MCF 10A (cell line): ENCODE measurements at regions of chr11 and their contacts with region 1.

Region 1: DNA sequence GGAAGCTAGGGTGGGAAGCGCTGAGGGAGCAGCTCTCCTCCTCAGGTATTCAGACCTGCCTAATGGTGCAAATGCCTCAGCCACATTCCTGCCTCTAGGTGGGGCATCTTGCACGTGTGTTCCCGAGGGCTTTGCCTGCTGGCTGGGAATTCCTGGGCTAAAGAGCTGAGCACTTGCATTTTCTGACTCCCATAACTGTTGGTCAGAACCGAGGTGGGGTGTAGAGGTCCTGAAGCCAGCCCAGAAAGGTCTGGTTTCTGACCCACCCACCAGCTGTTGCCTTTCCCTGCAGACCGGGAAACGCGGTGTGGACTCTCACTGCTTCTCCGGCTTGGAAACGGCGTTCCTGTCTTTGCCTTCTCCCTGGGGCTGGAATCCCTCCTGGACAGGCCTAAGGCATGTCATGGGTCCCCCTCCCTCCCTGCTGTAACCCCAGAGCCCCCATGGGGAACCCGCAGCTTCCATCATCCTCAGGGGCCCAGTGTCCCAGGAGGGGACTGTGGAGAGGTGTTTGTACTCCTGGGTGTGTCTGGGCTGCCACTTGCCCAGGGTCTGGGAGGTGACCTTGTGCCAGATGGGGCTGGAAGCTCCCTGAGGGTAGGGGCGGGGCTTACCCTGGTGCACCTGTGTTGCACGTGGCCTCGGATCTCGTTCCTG is 24.0 kb upstream of the SMIM38 start:
- DNase-seq: peak; percentile 84
- H3K4me3 Mint-ChIP-seq: no peak overlapping the region
- H3K27ac Mint-ChIP-seq: no peak overlapping the region
- H3K4me1 Mint-ChIP-seq: no peaks in the 10 kb centered on the region
- H3K27me3 Mint-ChIP-seq: no peaks in the 10 kb centered on the region
- CTCF ChIP-seq: peak; percentile 96

Region 2: GRCh38 chr11:69145062-69145405 is 13.3 kb after region 1 on chr11:
- CTCF ChIA-PET with region 1: interaction called, 19 read pairs
- POLR2A ChIA-PET with region 1: interaction called, 3 read pairs
- intact Hi-C with region 1: no loop called
- DNase-seq: no peak
- H3K4me3 Mint-ChIP-seq: no peak overlapping the region
- H3K27ac Mint-ChIP-seq: peak overlapping the region; percentile 33
- H3K4me1 Mint-ChIP-seq: peaks cover 33% of the 10 kb centered on the region
- H3K27me3 Mint-ChIP-seq: no peaks in the 10 kb centered on the region
- CTCF ChIP-seq: no peak

Region 3: DNA sequence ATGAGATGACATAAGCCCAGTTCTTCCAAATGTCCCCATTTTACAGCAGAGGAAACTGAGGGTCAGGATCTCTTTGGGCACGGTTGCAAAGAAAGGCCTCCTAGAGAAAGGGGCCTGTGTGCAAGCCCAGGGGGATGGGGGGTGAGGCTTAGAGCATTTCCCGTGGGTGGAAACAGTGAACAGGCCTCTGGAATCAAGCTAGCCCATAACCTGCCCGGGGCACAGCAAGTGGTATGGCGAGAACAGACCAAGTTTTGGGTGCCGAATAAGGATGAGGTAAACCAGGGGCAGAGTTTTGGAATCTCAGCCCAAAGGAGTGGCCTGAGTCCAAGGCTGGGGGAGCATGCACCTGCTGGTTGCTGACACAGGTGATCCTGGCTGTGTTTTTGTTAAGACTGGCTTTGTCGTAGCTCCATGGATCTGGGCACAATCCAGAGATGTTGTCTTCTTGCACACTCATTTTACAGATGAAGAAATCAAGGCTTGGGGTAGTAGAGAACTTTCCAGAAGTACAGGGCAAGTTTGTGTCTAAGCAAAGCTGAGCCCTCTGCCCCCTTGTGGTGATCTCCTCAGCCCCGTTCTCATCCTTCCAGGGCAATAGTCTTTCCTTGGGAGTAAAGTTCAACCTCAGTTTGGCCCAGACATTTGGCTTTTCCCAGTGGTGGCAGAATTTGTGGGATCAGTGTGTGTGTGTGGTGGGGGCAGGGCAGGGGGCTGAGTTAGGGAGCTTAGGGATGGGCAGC is 108.7 kb after region 1 on chr11:
- CTCF ChIA-PET with region 1: interaction called, 4 read pairs
- POLR2A ChIA-PET with region 1: no interaction called
- intact Hi-C with region 1: loop called (anchors 5 kb)
- DNase-seq: peak; percentile 41
- H3K4me3 Mint-ChIP-seq: no peak overlapping the region
- H3K27ac Mint-ChIP-seq: no peak overlapping the region
- H3K4me1 Mint-ChIP-seq: no peaks in the 10 kb centered on the region
- H3K27me3 Mint-ChIP-seq: peaks cover 11% of the 10 kb centered on the region
- CTCF ChIP-seq: peak; percentile 24

Region 4: DNA sequence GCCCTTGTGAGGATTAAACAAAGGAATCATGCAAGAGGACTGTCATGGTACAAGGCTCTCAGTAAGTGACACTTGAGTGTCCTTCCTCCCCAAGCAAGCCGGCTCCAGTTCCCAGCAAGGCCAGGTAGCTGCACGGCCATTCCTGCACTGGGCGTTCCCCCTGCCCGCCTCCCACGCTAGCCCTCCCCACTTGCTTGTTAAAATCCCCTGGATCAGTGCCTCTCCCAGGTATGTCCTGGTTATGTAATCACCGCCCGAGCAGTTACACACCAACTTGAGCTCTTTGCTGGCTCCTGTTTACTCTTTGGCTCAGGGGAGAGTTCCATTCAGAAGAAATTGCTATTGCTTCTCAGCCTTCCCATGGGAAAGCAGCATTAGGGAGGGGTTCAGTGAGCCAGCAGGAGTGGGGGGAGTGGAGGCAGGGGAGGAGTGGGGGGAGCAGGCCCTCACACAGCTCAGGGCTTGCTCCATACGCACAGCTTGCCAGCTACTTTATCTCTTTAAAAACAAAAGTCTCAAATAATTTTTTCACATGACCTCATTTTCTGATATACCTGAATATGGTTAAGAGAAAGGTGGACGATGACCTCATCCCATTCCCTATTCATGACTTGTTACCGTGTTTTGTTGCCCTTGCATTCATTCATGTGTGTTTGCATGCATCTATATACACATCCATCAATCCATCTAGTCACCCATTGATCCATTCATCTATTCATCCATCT is 142.9 kb after region 1 on chr11:
- CTCF ChIA-PET with region 1: interaction called, 3 read pairs
- POLR2A ChIA-PET with region 1: interaction called, 10 read pairs
- intact Hi-C with region 1: no loop called
- DNase-seq: peak; percentile 90
- H3K4me3 Mint-ChIP-seq: no peak overlapping the region
- H3K27ac Mint-ChIP-seq: no peak overlapping the region
- H3K4me1 Mint-ChIP-seq: peaks cover 18% of the 10 kb centered on the region
- H3K27me3 Mint-ChIP-seq: no peaks in the 10 kb centered on the region
- CTCF ChIP-seq: no peak

Region 5: DNA sequence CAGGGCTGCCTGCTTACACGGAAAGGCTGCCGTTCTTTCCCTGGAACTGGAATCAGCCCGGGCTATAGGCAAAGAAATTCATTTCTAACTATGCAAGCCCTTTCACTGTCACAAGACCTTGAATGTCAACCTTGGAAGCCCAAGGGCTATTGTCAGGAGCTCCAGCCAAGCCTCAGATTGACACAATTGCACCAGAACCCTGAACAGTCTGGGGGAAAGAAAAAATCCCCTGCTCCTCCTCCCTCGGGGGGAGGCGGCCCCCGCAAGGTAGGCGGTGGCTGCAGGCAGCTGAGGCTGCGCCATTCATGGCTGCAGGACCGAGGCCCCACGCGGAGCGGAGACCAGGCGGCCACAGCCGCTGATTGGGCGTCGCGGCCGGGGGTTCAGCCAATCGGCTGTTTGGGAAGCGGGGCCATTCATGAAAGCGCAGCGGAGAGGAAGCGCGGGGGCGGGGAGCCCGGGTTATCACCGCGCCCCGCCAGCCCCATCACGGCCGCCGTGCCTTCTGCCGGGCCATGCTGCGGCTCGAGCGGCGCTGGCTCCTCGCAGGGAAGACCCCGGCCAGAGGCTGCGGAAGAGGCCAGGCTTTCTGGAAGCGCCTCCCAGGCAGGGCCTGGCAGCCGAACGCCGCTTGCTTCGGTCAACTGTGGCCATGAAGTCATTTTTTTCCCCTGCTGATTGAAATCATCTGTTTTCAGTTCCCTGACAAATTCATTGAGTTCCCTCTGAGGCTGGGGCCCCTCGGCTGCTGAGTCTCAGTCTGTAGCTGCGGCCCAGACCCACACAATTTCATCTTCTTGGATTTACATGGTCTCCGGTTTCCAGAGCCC is 311.6 kb after region 1 on chr11:
- CTCF ChIA-PET with region 1: interaction called, 3 read pairs
- POLR2A ChIA-PET with region 1: no interaction called
- intact Hi-C with region 1: loop called (anchors 10 kb)
- DNase-seq: peak; percentile 80
- H3K4me3 Mint-ChIP-seq: no peak overlapping the region
- H3K27ac Mint-ChIP-seq: no peak overlapping the region
- H3K4me1 Mint-ChIP-seq: peaks cover 21% of the 10 kb centered on the region
- H3K27me3 Mint-ChIP-seq: no peaks in the 10 kb centered on the region
- CTCF ChIP-seq: no peak

Region 6: GRCh38 chr11:69588270-69588669 is 456.5 kb after region 1 on chr11:
- CTCF ChIA-PET with region 1: interaction called, 11 read pairs
- POLR2A ChIA-PET with region 1: no interaction called
- intact Hi-C with region 1: no loop called
- DNase-seq: peak; percentile 61
- H3K4me3 Mint-ChIP-seq: no peak overlapping the region
- H3K27ac Mint-ChIP-seq: peak overlapping the region; percentile 78
- H3K4me1 Mint-ChIP-seq: peaks cover 18% of the 10 kb centered on the region
- H3K27me3 Mint-ChIP-seq: no peaks in the 10 kb centered on the region
- CTCF ChIP-seq: peak; percentile 39